GM13977 (cell line): ENCODE measurements at regions of chr7 and their contacts with region 1.

Region 1: GRCh38 chr7:2354186-2354938 is at the start of gene EIF3B:
- DNase-seq: peak; percentile 97
- CTCF ChIP-seq: no peak

Region 2: DNA sequence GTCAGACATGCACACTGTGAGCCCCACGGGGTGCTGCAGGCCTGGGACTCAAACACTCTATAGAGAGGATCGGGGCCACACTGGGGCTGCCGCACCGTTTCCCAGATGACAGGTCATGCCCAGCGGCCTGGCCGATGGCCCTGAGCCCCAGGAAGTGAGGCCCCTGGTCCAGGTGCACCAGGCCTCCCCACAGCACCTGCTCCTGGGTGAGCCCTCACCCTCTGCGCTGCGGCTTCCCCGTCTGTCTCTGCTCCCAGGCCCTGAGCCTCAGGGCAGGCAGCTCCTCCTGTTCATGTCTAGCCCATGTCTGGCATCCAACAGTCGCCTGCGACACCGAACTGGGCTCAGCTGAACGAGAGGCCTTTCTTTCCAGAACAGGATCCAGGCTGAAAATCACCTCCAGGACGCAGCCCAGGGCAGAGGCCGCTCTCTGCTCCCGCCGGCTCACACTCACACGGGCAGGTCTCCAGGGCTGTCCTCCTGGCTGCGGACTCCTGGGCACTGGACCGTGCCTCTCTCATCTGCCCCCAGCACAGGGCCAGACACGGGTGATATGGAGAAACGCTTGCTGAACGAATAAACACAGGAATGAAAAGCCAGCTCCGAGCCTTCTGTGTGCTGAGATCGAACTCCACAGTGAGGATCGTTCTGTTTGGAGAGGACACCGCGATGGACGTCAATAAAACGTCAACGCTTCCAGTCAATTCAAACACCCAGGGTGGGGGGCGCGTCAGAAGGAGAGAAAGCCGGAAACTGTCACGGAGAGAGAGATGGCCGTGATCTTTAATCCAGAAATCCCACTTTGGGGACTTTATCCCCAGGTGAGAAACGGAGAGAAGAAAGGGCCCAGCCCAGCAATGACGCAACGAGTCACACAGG is 481.9 kb before region 1 on chr7:
- in situ Hi-C with region 1: no loop called
- DNase-seq: no peak
- CTCF ChIP-seq: no peak

Region 3: GRCh38 chr7:2232766-2233520 is 121.4 kb before region 1 on chr7 and contains the start of gene MAD1L1:
- in situ Hi-C with region 1: loop called (anchors 10 kb)
- DNase-seq: peak; percentile 94
- CTCF ChIP-seq: no peak